ENCODE measurements at regions of chr22 and their contacts with region 1.

Region 1: DNA sequence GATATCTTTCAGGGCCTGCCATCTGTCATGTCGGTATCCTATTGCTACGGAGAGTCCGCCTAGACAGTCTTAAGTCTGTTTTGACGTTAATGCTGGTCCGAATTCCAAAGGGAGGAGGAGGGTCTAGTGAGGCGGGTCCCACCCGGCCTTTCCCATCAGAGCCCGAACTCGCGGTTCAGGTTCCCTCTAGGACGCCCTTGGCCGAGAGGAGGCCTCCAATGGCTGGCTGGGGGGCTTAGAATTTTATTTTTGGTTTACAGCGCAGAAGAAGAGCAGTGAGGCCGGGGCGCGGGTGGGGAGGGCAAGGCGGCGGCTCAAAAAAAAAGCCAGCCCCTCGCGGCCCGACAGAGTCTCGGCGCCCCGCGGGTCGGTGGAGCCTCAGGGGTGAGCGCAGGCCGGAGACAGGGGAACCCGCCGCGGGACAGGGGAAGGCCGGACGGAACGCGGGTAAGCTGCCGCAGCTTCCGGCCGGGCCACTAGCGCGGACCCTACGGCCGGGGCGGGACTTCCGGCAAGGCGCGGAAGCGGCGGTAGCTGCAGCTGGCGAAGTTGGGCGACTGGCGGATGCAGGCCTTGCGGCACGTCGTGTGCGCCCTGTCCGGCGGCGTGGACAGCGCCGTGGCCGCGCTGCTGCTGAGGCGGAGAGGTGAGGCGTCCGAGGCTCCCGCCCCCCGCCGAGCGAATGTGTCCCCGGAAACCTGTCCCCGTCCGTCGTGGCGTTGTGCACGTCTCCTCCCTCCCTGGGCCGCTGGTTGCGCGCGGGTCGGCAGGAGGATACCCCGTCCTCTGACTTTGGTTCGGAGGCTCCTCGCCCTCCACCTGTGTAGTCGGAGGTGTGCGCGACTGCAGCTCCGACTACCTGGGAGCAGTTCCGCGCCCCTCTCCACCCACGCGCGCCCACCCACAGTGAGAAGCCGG is at the start of gene TRMU:
- DNase-seq: peak; percentile 94
- H3K4me3 Mint-ChIP-seq: peak within 1 kb of the TSS; percentile 91
- H3K27ac Mint-ChIP-seq: peak within 1 kb of the TSS; percentile 96
- H3K4me1 Mint-ChIP-seq: peaks cover 24% of the 10 kb centered on the region
- H3K27me3 Mint-ChIP-seq: no peaks in the 10 kb centered on the region
- total RNA-seq, gene TRMU: 79.9 and 84.4 TPM in 2 replicates

Region 2: GRCh38 chr22:46006379-46007002 is 329.0 kb before region 1 on chr22:
- intact Hi-C with region 1: loop called (anchors 10 kb)
- DNase-seq: peak; percentile 96
- H3K4me3 Mint-ChIP-seq: no peak overlapping the region
- H3K27ac Mint-ChIP-seq: no peak overlapping the region
- H3K4me1 Mint-ChIP-seq: peaks cover 7% of the 10 kb centered on the region
- H3K27me3 Mint-ChIP-seq: no peaks in the 10 kb centered on the region

Region 3: GRCh38 chr22:46303347-46303965 is 32.0 kb before region 1 on chr22:
- intact Hi-C with region 1: no loop called
- DNase-seq: no peak
- H3K4me3 Mint-ChIP-seq: peak overlapping the region; percentile 1
- H3K27ac Mint-ChIP-seq: peak overlapping the region; percentile 30
- H3K4me1 Mint-ChIP-seq: peaks cover 36% of the 10 kb centered on the region
- H3K27me3 Mint-ChIP-seq: no peaks in the 10 kb centered on the region

Measured in activated CD4-positive, alpha-beta T cell treated with anti-CD3 and anti-CD28 coated beads, Interleukin-2, amount 10 ng/mL, durations not matched to agents 24 days and 14 days (primary cell).